ENCODE measurements at regions of chr4 and their contacts with region 1.

Region 1: GRCh38 chr4:55546756-55547465 is at the start of gene CLOCK:
- DNase-seq: peak; percentile 80
- H3K4me3 Mint-ChIP-seq: peak within 1 kb of the TSS; percentile 92
- H3K27ac Mint-ChIP-seq: peak within 1 kb of the TSS; percentile 86
- H3K4me1 Mint-ChIP-seq: peaks cover 41% of the 10 kb centered on the region
- H3K27me3 Mint-ChIP-seq: peaks cover 13% of the 10 kb centered on the region
- total RNA-seq, gene CLOCK: 12.7 and 13.0 TPM in 2 replicates

Region 2: GRCh38 chr4:54322818-54323417 is 1224.0 kb before region 1 on chr4:
- intact Hi-C with region 1: loop called (anchors 5 kb)
- DNase-seq: peak; percentile 21
- H3K4me3 Mint-ChIP-seq: no peak overlapping the region
- H3K27ac Mint-ChIP-seq: no peak overlapping the region
- H3K4me1 Mint-ChIP-seq: peaks cover 15% of the 10 kb centered on the region
- H3K27me3 Mint-ChIP-seq: no peaks in the 10 kb centered on the region

Region 3: DNA sequence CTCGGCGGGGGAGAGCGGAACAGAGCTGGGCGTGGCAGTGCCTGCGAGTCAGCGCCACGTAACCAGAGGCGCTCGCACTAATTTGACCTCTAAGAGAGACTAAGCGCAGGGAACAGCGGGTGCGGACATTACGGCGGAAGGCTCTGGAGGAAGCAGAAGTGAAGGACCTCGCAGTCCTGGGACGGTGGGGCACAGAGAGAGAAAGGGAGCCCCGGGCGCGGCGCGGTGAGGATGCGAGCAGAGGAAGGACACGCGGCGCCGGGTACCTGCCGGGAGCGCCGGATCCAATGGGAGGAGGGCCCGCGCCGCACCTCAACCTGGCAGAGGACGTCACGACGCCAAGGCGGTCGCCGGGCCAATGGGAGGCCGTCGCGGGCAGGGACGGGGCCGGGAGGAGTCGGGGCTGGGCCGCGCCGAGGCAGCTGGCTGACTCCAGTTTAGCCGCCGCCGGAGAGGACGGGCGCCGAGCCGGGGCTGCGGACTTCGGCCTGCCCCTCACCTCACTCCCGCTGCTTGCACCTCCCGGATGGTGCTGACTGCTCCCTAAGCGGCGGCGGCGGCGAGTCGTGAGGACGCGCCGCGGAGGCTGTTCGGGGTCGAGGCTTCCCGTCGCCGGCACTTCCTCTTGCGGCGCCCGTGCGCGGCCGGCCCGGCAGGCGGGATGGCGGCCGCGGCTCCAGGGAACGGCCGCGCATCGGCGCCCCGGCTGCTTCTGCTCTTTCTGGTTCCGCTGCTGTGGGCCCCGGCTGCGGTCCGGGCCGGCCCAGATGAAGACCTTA is 151.2 kb before region 1 on chr4 and contains the start of gene TMEM165:
- intact Hi-C with region 1: loop called (anchors 1 kb)
- DNase-seq: peak; percentile 88
- H3K4me3 Mint-ChIP-seq: peak within 1 kb of the TSS; percentile 97
- H3K27ac Mint-ChIP-seq: peak within 1 kb of the TSS; percentile 96
- H3K4me1 Mint-ChIP-seq: peaks cover 40% of the 10 kb centered on the region
- H3K27me3 Mint-ChIP-seq: peaks cover 3% of the 10 kb centered on the region
- total RNA-seq, gene TMEM165: 110 and 112 TPM in 2 replicates

Region 4: GRCh38 chr4:55561889-55562288 is 15.0 kb after region 1 on chr4:
- intact Hi-C with region 1: loop called (anchors 1 kb)
- DNase-seq: no peak
- H3K4me3 Mint-ChIP-seq: no peak overlapping the region
- H3K27ac Mint-ChIP-seq: peak overlapping the region; percentile 53
- H3K4me1 Mint-ChIP-seq: peaks cover 7% of the 10 kb centered on the region
- H3K27me3 Mint-ChIP-seq: peaks cover 7% of the 10 kb centered on the region

Region 5: DNA sequence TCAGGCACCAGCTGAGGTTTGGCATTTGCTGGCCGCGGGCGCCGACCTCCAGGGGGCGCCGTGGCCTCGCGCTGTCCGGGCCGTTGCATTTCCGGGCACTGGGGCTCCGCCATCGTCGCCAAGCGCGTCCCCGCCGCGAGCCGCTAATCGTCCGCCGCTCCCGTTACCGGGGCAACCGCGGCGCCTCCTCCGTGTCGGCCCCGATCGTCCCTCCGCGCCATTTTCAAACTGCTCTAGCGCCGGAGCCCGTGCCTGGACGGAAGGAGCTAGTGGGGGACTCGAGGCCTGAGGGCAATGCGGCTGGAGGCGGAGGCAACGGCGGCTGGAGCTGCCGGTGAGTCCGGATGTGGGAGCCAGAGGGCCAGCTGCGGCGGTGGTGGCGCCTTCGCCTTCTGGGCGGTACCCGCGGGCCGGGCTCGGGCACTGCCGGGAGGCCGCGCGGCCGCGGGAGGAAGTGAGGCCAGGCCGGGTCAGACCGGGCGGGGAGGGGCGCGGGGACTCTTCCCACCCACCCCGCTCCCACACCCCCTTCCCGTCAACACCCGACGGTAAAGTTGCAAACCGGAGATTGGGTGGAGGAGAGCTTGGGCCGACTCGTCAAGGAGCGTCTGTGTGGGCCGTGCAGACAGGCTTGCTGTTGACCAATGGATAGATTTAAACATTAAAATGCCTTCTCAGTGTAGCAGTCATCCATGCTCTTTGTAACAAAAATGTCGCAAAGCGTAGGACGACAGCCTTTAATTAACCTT is 402.0 kb after region 1 on chr4 and contains the start of gene CEP135:
- intact Hi-C with region 1: loop called (anchors 2 kb)
- DNase-seq: peak; percentile 91
- H3K4me3 Mint-ChIP-seq: peak within 1 kb of the TSS; percentile 86
- H3K27ac Mint-ChIP-seq: peak within 1 kb of the TSS; percentile 92
- H3K4me1 Mint-ChIP-seq: peaks cover 44% of the 10 kb centered on the region
- H3K27me3 Mint-ChIP-seq: no peaks in the 10 kb centered on the region
- total RNA-seq, gene CEP135: 19.3 and 19.9 TPM in 2 replicates

Region 6: GRCh38 chr4:56387023-56388001 is 840.4 kb after region 1 on chr4 and contains the start of gene AASDH:
- intact Hi-C with region 1: loop called (anchors 5 kb)
- DNase-seq: peak; percentile 93
- H3K4me3 Mint-ChIP-seq: peak within 1 kb of the TSS; percentile 92
- H3K27ac Mint-ChIP-seq: peak within 1 kb of the TSS; percentile 97
- H3K4me1 Mint-ChIP-seq: peaks cover 26% of the 10 kb centered on the region
- H3K27me3 Mint-ChIP-seq: no peaks in the 10 kb centered on the region
- total RNA-seq, gene AASDH: 9.8 and 12.0 TPM in 2 replicates

Region 7: DNA sequence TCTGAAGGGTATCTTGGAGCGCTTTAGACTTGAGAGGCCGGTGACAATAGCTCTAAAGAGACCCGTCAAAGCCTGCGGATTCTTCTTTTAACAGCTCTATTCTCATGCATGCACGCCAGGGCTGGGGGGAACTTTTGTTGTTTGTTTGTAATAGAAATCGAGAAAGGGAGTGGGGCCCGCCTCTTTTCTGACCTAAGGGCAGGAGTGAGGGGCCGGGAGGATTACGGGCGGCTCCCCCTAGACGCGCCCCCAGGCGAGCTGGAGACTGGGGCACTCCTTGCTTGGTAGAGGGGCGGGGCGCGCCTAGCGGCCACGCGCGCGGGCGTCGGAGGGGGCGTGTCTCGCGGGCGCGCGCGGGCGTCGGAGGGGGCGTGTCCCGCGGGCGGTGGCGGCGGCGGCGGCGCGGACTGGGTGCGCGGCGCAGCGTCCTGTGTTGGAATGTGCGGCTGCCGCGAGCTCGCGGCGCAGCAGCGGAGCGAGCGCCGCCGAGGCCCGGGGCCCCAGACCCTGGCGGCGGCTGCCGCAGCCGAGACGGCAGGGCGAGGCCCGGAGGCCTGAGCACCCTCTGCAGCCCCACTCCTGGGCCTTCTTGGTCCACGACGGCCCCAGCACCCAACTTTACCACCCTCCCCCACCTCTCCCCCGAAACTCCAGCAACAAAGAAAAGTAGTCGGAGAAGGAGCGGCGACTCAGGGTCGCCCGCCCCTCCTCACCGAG is 1360.7 kb after region 1 on chr4 and contains the start of gene REST:
- intact Hi-C with region 1: loop called (anchors 10 kb)
- DNase-seq: peak; percentile 81
- H3K4me3 Mint-ChIP-seq: peak within 1 kb of the TSS; percentile 84
- H3K27ac Mint-ChIP-seq: peak within 1 kb of the TSS; percentile 78
- H3K4me1 Mint-ChIP-seq: peaks cover 41% of the 10 kb centered on the region
- H3K27me3 Mint-ChIP-seq: peaks cover 10% of the 10 kb centered on the region
- total RNA-seq, gene REST: 52.4 and 60.0 TPM in 2 replicates

Measured in activated T-helper 1 cell treated with anti-CD3 and anti-CD28 coated beads, Interleukin-12 subunit alpha, Interleukin-12 subunit beta, Interleukin-2, Interleukin-4 antibody, amounts not matched to agents 30 ng/mL and 10 ng/mL and 1 ng/mL, durations not matched to agents 14 hours and 24 hours and 36 hours (primary cell).